Mammary epithelial cell (primary cell): ENCODE measurements at regions of chr14 and their contacts with region 1.

Region 1: GRCh38 chr14:61644834-61645233 is 50.5 kb upstream of the HIF1A start:
- DNase-seq: no peak
- H3K4me3 ChIP-seq: no peak overlapping the region
- H3K27ac ChIP-seq: no peak overlapping the region
- H3K4me1 ChIP-seq: peaks cover 25% of the 10 kb centered on the region
- H3K27me3 ChIP-seq: no peaks in the 10 kb centered on the region
- CTCF ChIP-seq: no peak

Region 2: GRCh38 chr14:61525293-61526011 is 119.4 kb before region 1 on chr14:
- CTCF ChIA-PET with region 1: no interaction called
- dilution Hi-C with region 1: no loop called
- in situ Hi-C with region 1: no loop called
- intact Hi-C with region 1: loop called (anchors 5 kb)
- DNase-seq: peak; percentile 100
- H3K4me3 ChIP-seq: no peak overlapping the region
- H3K27ac ChIP-seq: peak overlapping the region; percentile 89
- H3K4me1 ChIP-seq: peaks cover 62% of the 10 kb centered on the region
- H3K27me3 ChIP-seq: no peaks in the 10 kb centered on the region
- CTCF ChIP-seq: no peak

Region 3: GRCh38 chr14:61569783-61570182 is 75.1 kb before region 1 on chr14:
- CTCF ChIA-PET with region 1: no interaction called
- dilution Hi-C with region 1: loop called (anchors 5 kb)
- in situ Hi-C with region 1: no loop called
- intact Hi-C with region 1: loop called (anchors 5 kb)
- DNase-seq: peak; percentile 95
- H3K4me3 ChIP-seq: no peak overlapping the region
- H3K27ac ChIP-seq: peak overlapping the region; percentile 80
- H3K4me1 ChIP-seq: peaks cover 68% of the 10 kb centered on the region
- H3K27me3 ChIP-seq: no peaks in the 10 kb centered on the region
- CTCF ChIP-seq: no peak